ENCODE measurements at regions of chr5 and their contacts with region 1.

Region 1: DNA sequence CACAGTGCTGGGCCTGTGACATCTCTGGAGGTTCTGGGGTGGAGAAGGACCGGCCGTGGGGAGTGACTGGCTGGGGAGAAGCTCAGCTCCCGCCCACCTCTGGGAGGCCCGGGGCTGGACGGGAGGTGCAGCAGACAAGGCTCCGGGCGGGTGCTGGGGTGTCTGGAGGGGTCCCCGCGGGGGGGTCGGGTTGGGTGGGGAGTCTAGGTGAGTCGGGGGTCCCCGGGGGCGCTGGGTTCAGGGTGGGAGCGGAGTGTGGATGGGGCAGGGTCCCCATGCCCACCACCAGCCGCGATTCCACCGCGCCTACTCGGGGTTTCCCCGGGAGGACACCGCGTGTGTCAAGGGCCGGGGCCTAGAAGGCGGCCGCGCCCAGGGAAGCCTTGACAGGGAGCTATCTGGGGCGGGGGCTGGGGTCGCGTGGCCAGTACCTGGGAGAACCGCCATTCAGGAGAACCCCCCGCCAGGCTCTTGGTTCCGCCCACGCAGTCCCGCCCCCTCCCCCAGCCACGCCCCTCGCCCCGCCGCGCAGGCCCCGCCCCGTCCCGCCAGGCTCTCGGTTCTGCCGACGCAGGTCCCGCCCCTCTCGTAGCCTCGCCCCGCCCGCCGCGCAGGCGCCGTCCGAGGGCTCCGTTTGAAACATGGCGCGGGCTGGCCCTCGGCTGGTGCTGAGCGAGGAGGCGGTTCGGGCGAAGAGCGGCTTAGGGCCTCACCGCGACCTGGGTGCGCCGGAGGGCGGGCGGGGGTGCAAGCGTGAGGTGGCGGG is at the start of gene CEP72:
- H3K4me3 ChIP-seq: peak within 1 kb of the TSS; percentile 81
- H3K27ac ChIP-seq: peak within 1 kb of the TSS; percentile 44; the same call in 1 of the 2 replicates
- H3K4me1 ChIP-seq: peaks cover 4% of the 10 kb centered on the region
- CTCF ChIP-seq: no peak

Region 2: DNA sequence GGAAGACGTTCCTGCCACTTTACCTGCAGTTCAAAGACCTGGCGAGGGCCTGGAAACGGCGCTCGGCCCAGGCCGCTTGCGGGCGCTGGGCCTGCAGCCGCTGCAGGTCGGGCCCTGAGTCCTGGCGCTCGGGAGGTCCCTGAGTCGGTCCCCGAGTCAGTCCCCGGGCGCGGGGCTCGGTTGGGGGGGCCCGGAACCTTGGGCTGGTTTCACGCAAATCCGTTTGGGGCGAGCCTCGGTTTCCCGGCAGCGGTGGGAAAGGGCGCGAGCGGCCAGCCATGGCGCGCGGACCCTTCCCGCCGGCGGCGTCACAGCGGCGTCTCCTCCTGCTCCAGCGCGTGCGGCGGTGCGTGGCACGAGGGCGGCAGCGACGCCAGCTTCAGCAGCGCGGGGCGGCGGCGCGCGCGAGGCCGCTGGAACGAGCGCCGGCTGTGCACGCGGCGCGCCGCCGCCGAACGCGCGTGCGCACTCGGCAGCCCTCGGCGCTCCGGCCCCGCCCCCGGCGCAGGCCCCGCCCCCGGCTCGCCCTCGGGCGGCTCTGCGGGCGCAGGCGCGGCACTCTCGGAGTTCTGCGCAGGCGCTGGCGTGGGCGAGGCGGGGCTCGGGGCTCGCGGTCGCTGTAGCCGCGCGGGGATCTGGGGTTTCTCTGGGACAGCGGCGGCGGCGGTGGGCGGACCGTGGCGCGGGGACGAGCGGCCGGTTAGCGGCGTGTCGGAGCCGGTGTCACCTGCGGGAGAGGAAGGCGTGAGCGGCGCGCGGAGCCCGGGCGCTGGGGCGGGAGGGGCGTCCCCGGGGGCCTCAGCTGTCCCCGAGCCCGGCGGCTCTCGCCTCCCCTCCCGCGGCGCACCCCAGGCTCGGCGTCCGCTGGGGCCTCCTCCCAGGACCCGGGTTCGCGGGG is 139.0 kb before region 1 on chr5:
- CTCF ChIA-PET with region 1: no interaction called
- POLR2A ChIA-PET with region 1: interaction called, 17 read pairs
- H3K4me3 ChIP-seq: peak overlapping the region; percentile 66
- H3K27ac ChIP-seq: peak overlapping the region; percentile 95
- H3K4me1 ChIP-seq: peaks cover 11% of the 10 kb centered on the region
- CTCF ChIP-seq: 0 out of 2 replicates have a peak, but pooled peaks have one; percentile 21

Region 3: GRCh38 chr5:627840-628239 is 15.9 kb after region 1 on chr5:
- CTCF ChIA-PET with region 1: no interaction called
- POLR2A ChIA-PET with region 1: no interaction called
- H3K4me3 ChIP-seq: no peak overlapping the region
- H3K27ac ChIP-seq: no peak overlapping the region
- H3K4me1 ChIP-seq: no peaks in the 10 kb centered on the region
- CTCF ChIP-seq: no peak

Region 4: GRCh38 chr5:801472-801871 is 189.6 kb after region 1 on chr5:
- CTCF ChIA-PET with region 1: no interaction called
- POLR2A ChIA-PET with region 1: no interaction called
- H3K4me3 ChIP-seq: no peak overlapping the region
- H3K27ac ChIP-seq: no peak overlapping the region
- H3K4me1 ChIP-seq: no peaks in the 10 kb centered on the region
- CTCF ChIP-seq: no peak

Measured in HEK293 (cell line).